ENCODE measurements at regions of chr22 and their contacts with region 1.

Region 1: DNA sequence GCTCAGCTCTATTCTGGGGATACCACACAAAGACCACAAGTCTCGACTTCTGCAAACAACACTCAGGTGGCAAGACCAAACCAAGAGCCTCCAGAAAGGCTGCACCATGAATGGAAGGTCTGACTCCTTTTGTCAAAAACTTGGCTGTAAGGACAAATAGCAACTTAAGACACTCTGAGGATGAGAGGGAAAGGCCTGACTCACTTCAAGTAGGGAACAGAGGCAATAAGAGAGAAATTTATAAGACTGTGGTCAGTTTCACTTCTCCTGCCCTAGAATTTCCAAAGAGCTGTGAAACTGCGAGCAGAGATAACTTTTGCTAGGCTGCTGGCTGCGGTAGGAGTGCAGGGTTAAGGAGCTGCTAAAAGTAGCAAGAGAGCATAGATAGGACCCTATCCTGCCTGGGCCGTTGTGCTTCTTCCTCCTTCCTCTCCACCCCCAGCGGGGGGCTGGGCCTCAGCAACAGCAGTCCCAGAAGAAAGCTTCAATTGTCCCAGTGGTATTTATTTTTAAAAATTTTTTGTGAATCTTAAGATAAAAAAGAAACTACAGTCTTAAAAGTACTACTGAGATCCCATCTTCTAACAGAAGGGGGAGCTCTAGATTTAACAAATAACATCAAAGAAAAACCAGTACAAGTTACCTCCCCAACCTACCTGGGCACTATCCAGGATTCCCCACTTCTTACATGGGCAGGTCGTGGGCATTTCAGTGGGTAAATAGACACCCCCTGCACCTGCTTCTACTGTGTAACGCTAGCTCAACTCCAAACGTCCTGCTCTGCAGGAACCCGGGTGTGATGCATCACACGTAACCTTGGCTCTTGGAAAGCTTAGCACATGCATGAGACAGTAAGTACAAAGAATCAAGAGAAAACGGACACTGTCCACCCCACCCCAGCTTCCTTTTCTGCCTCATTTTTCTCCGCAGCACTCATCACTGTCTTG is 66.4 kb downstream of the SGSM3 start:
- DNase-seq: no peak
- ATAC-seq: peak; percentile 62
- H3K4me3 ChIP-seq: peak overlapping the region in 1 of 2 donors; percentile 49
- H3K27ac ChIP-seq: no peak overlapping the region
- H3K4me1 ChIP-seq: peaks cover 0 to 3% of the 10 kb centered on the region in 2 donors
- H3K27me3 ChIP-seq: no peaks in the 10 kb centered on the region

Region 2: DNA sequence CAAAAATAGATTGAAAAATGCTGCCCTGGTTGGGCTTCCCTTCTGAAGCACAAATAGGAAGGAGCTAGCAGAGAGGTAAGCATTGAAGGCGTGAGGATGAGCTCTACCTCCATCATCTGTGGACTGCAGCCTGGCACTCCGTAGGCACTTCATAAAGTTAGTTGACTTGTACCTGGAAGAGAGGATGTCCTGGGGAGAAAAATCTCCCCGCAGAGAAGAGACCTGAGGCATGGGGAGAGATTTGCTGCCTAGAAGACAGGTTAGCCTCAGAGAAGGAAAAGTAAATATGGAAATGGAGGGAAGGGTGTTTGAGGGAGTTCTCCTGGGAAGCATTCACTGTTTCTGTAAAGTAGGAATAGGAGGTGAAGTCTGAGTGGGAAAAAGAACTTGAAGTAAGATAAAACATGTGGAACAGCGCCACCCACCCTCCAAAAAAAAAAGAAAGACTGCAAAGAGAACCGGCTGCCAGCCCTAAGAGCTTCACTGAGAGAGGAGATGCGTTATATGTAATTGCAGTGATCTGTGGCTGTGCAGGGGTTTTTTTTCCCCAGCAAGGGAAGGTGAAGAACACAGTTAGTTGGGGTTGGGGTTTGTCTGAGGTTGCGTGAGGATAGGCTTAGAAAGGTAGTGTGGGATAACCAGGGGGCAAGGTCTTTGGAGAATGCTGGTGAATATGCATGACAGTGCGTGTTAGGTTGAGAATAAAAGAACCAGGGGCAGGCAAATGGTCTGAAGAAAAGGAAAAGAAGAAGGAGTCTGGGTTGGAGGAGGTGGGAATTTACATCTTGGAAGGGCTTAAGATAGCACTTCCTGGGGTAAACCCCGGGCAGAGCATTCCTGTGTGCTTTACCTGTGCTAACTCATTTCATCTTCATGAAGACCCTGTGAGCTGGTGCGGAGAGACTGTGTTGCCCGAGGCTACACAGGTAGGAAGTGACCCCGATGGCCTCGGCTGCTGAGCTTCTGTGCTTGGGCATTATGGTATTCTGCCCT is 243.1 kb before region 1 on chr22:
- intact Hi-C with region 1: no loop called
- DNase-seq: no peak
- ATAC-seq: peak; percentile 24
- H3K4me3 ChIP-seq: no peak overlapping the region
- H3K27ac ChIP-seq: no peak overlapping the region
- H3K4me1 ChIP-seq: peaks cover 2 to 11% of the 10 kb centered on the region in 2 donors
- H3K27me3 ChIP-seq: no peaks in the 10 kb centered on the region

Region 3: DNA sequence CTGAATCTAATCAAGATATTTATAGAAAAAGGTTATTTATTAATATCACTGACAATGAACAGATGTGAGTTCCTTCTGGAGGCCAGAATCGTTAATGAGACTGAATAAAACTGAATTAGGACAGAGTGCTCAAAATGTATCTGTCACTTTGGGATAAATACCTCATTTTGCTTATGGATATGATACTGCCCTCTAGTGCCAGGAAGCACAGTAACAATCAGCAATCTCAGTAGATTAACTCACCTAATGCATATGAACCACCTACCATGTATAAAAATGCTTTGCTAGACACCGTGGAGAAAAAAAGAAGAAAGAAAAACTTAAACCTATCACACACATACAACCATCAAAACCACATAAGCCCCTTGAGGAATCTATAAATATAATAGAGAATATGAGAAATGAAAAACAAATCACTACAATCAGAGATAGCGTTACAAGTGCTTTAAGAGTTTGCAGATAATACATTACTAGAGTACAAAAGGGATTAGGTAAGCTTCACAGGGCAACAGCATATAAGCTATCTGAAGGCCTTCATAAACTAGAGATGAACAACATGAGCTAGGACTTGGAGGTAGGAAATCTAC is 51.0 kb after region 1 on chr22:
- intact Hi-C with region 1: loop called in 1 of 2 experiments (anchors 5 kb)
- DNase-seq: no peak
- ATAC-seq: no peak
- H3K4me3 ChIP-seq: no peak overlapping the region
- H3K27ac ChIP-seq: no peak overlapping the region
- H3K4me1 ChIP-seq: peaks cover 4 to 14% of the 10 kb centered on the region in 2 donors
- H3K27me3 ChIP-seq: no peaks in the 10 kb centered on the region

Region 4: GRCh38 chr22:40645579-40646197 is 208.9 kb after region 1 on chr22:
- intact Hi-C with region 1: loop called (anchors 2 kb)
- DNase-seq: no peak
- ATAC-seq: no peak
- H3K4me3 ChIP-seq: no peak overlapping the region
- H3K27ac ChIP-seq: no peak overlapping the region
- H3K4me1 ChIP-seq: no peaks in the 10 kb centered on the region
- H3K27me3 ChIP-seq: no peaks in the 10 kb centered on the region